ENCODE measurements at regions of chr18 and their contacts with region 1.

Region 1: GRCh38 chr18:55589625-55590291 is 1.8 kb upstream of the TCF4 start:
- DNase-seq: peak; percentile 99
- H3K4me3 ChIP-seq: peak overlapping the region; percentile 69 to 83 (median 72)
- H3K27ac ChIP-seq: peak overlapping the region; percentile 86 to 91 (median 88)
- H3K4me1 ChIP-seq: peaks cover 0 to 27% (median 24%) of the 10 kb centered on the region in 4 donors
- H3K27me3 ChIP-seq: no peaks in the 10 kb centered on the region
- CTCF ChIP-seq: peak in 1 of 3 experiments; percentile 34
- EP300 ChIP-seq: no peak
- POLR2A ChIP-seq: no peak

Region 2: GRCh38 chr18:55322178-55322735 is 267.5 kb before region 1 on chr18:
- intact Hi-C with region 1: loop called (anchors 10 kb)
- DNase-seq: no peak
- H3K4me3 ChIP-seq: peak overlapping the region; percentile 60 to 77 (median 65)
- H3K27ac ChIP-seq: peak overlapping the region; percentile 88 to 94 (median 91)
- H3K4me1 ChIP-seq: peaks cover 24 to 48% (median 31%) of the 10 kb centered on the region in 4 donors
- H3K27me3 ChIP-seq: no peaks in the 10 kb centered on the region
- CTCF ChIP-seq: peak in 1 of 3 experiments; percentile 11
- EP300 ChIP-seq: no peak
- POLR2A ChIP-seq: no peak

Region 3: DNA sequence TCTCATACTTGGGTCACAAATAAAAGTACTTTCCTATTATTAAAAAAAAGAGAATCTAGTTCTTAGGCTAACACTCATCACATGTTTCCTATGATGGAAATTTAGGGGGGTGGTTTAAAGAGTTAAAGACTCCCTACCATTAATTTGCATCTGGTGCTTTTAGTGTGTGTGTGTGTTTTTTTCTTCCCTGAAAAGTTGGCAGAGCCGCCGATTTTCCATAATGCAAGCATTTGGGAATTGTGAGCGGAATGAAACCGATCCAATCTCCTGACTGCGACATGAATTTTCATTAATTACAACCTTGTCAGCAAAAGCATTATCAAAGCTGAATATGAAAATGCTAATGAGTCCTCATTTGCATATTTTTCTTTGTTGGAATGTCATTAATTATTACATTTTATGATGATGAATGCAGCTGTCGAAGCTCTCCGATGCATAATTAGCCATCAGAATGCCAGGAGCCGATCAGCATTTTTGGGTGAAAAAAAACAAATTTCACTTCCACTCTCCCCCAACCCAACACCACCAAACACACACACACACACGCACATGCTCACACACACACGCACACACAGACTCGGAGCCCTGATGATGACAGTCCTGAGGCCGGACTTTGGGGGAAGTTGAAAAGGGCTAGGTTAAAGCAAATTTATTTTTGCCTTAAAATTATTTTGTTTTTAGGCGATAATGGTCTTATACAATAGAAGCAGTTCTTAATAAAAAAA is 167.1 kb before region 1 on chr18:
- intact Hi-C with region 1: loop called (anchors 5 kb)
- DNase-seq: no peak
- H3K4me3 ChIP-seq: peak overlapping the region; percentile 39 to 53 (median 42)
- H3K27ac ChIP-seq: peak overlapping the region; percentile 40 to 67 (median 59)
- H3K4me1 ChIP-seq: peaks cover 0 to 13% (median 7%) of the 10 kb centered on the region in 4 donors
- H3K27me3 ChIP-seq: no peaks in the 10 kb centered on the region
- CTCF ChIP-seq: no peak
- EP300 ChIP-seq: no peak
- POLR2A ChIP-seq: no peak

Region 4: DNA sequence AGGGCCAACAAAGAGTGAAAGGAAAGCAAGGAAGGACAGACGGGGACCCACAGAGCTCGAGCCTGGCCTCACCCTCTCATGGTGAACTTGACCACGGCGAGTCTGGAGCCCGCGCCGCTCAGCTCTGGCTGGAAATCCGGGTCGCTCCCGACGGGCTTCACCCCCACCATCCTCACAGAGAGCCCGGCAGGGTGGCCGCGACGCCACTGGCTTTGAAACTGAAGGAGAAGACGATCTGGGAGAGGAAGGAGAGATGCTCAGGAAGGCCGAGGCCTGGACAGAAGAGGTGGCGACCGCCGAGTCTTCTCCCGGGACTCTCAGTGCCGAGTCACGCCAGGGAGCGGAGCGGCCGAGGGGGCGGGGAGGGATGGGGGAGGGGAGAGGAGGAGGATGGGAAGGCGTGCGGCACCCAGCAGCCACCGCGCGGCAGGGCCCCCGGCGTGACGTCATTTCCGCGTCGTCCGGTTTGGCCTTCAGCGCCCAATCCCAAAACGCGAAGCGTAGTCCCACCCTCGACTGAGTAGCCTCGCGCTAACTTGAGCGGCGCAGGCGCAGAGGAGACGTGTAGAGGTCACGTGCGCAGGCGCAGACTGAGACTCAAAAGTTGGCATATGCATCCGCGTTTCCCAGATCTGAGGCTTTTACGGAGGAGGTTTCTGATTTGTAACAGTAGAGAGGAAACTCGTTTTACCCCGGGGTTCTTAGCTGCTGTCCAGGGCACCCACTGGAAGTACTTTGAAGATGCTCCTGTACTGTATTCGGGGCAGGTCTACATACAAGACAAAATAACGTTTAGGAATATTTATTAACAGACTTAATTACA is 1048.7 kb after region 1 on chr18 and contains the start of gene TXNL1:
- intact Hi-C with region 1: loop called (anchors 10 kb)
- DNase-seq: peak; percentile 100
- H3K4me3 ChIP-seq: peak within 1 kb of the TSS; percentile 78 to 98 (median 88)
- H3K27ac ChIP-seq: peak within 1 kb of the TSS; percentile 94 to 99 (median 98)
- H3K4me1 ChIP-seq: peaks cover 29 to 48% (median 40%) of the 10 kb centered on the region in 4 donors
- H3K27me3 ChIP-seq: no peaks in the 10 kb centered on the region
- CTCF ChIP-seq: no peak
- EP300 ChIP-seq: no peak
- POLR2A ChIP-seq: peak; percentile 73
- total RNA-seq, gene TXNL1: 29.9 to 42.5 (median 40.4) TPM